Dendritic cell treated with granulocyte-macrophage colony-stimulating factor and Interleukin-4, amounts not matched to agents 40 ng/mL and 50 ng/mL, for 4 days (primary cell): ENCODE measurements at regions of chr11 and their contacts with region 1.

Region 1: GRCh38 chr11:62694455-62695167 is 5.3 kb upstream of the LRRN4CL start:
- H3K4me3 Mint-ChIP-seq: no peak overlapping the region
- H3K27ac Mint-ChIP-seq: peak overlapping the region; percentile 4
- H3K4me1 Mint-ChIP-seq: peaks cover 9% of the 10 kb centered on the region
- H3K27me3 Mint-ChIP-seq: peaks cover 4% of the 10 kb centered on the region

Region 2: GRCh38 chr11:62394825-62395538 is 299.6 kb before region 1 on chr11:
- intact Hi-C with region 1: loop called (anchors 10 kb)
- H3K4me3 Mint-ChIP-seq: no peak overlapping the region
- H3K27ac Mint-ChIP-seq: no peak overlapping the region
- H3K4me1 Mint-ChIP-seq: peaks cover 50% of the 10 kb centered on the region
- H3K27me3 Mint-ChIP-seq: no peaks in the 10 kb centered on the region

Region 3: GRCh38 chr11:62678770-62679696 is 15.6 kb before region 1 on chr11 and contains the start of gene UBXN1:
- intact Hi-C with region 1: loop called (anchors 1 kb)
- H3K4me3 Mint-ChIP-seq: peak within 1 kb of the TSS; percentile 87
- H3K27ac Mint-ChIP-seq: peak within 1 kb of the TSS; percentile 95
- H3K4me1 Mint-ChIP-seq: peaks cover 44% of the 10 kb centered on the region
- H3K27me3 Mint-ChIP-seq: no peaks in the 10 kb centered on the region